ENCODE measurements at regions of chr6 and their contacts with region 1.

Region 1: GRCh38 chr6:44096612-44097011 is 30.6 kb downstream of the MRPL14 start:
- DNase-seq: peak; percentile 45 to 78 (median 68)
- ATAC-seq: peak; percentile 92
- H3K4me3 ChIP-seq: no peak overlapping the region
- H3K4me3 Mint-ChIP-seq: no peak overlapping the region
- H3K27ac ChIP-seq: no peak overlapping the region
- H3K27ac Mint-ChIP-seq: no peak overlapping the region
- H3K4me1 ChIP-seq: no peaks in the 10 kb centered on the region
- H3K4me1 Mint-ChIP-seq: peaks cover 0 to 10% (median 0%) of the 10 kb centered on the region in 7 donors
- H3K27me3 ChIP-seq: no peaks in the 10 kb centered on the region
- H3K27me3 Mint-ChIP-seq: no peaks in the 10 kb centered on the region

Region 2: GRCh38 chr6:44151348-44152108 is 54.9 kb after region 1 on chr6:
- CTCF ChIA-PET with region 1: interaction called, 25 read pairs
- POLR2A ChIA-PET with region 1: interaction called, 3 read pairs
- intact Hi-C with region 1: loop called (anchors 1 kb)
- DNase-seq: peak; percentile 63 to 88 (median 73)
- ATAC-seq: peak; percentile 94
- H3K4me3 ChIP-seq: no peak overlapping the region
- H3K4me3 Mint-ChIP-seq: peak overlapping the region in 3 of 10 donors; percentile 30 to 42 (median 34)
- H3K27ac ChIP-seq: no peak overlapping the region
- H3K27ac Mint-ChIP-seq: peak overlapping the region in 3 of 9 donors; percentile 5 to 43 (median 34)
- H3K4me1 ChIP-seq: peaks cover 3 to 8% of the 10 kb centered on the region in 2 donors
- H3K4me1 Mint-ChIP-seq: peaks cover 0 to 7% (median 4%) of the 10 kb centered on the region in 7 donors
- H3K27me3 ChIP-seq: no peaks in the 10 kb centered on the region
- H3K27me3 Mint-ChIP-seq: no peaks in the 10 kb centered on the region

Region 3: DNA sequence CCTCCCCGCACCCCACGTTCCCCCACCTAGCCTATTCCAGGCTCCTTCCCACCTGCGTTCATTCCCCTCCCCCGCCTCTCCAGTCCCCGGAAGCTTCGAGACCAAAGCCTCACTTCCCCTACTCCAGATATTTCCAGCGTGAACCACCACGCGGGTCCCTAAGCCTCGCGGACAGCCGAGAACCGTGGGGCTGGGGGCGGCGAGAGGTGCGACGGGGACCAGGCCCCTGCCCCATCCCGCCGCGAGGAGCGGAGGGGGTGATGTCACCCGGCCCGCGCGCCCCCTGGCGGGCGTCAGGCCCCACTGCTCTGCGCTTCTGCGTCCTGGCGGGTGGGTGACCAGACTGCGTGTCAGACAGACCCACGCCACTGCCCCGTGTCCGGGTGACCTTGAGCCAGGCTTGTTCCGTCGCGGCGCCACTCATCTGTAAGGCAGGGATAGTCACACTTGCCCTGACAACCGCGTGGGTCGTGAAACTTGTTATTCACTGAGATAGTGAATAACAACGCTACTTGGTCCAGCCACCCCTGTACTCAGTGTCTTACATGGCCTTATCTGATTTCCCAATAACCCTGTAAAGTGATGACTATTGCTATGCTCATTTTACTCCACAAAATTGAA is 141.3 kb after region 1 on chr6:
- CTCF ChIA-PET with region 1: interaction called, 4 read pairs
- POLR2A ChIA-PET with region 1: no interaction called
- intact Hi-C with region 1: loop called (anchors 1 kb)
- DNase-seq: peak; percentile 62 to 87 (median 80)
- ATAC-seq: peak; percentile 94
- H3K4me3 ChIP-seq: peak overlapping the region; percentile 93
- H3K4me3 Mint-ChIP-seq: peak overlapping the region; percentile 82 to 92 (median 90)
- H3K27ac ChIP-seq: peak overlapping the region; percentile 83
- H3K27ac Mint-ChIP-seq: peak overlapping the region; percentile 38 to 98 (median 89)
- H3K4me1 ChIP-seq: peaks cover 5 to 7% of the 10 kb centered on the region in 2 donors
- H3K4me1 Mint-ChIP-seq: peaks cover 0 to 28% (median 11%) of the 10 kb centered on the region in 7 donors
- H3K27me3 ChIP-seq: no peaks in the 10 kb centered on the region
- H3K27me3 Mint-ChIP-seq: no peaks in the 10 kb centered on the region

Region 4: GRCh38 chr6:44312901-44313788 is 216.5 kb after region 1 on chr6 and contains the start of gene AARS2:
- CTCF ChIA-PET with region 1: no interaction called
- POLR2A ChIA-PET with region 1: no interaction called
- intact Hi-C with region 1: no loop called
- DNase-seq: peak; percentile 79 to 95 (median 88)
- ATAC-seq: peak; percentile 99
- H3K4me3 ChIP-seq: peak within 1 kb of the TSS; percentile 91
- H3K4me3 Mint-ChIP-seq: peak within 1 kb of the TSS; percentile 94 to 100 (median 96)
- H3K27ac ChIP-seq: peak within 1 kb of the TSS; percentile 89
- H3K27ac Mint-ChIP-seq: peak within 1 kb of the TSS; percentile 88 to 98 (median 94)
- H3K4me1 ChIP-seq: peaks cover 7 to 9% of the 10 kb centered on the region in 2 donors
- H3K4me1 Mint-ChIP-seq: peaks cover 16 to 32% (median 25%) of the 10 kb centered on the region in 7 donors
- H3K27me3 ChIP-seq: no peaks in the 10 kb centered on the region
- H3K27me3 Mint-ChIP-seq: peaks cover 0 to 13% (median 3%) of the 10 kb centered on the region in 5 donors
- total RNA-seq, gene AARS2: 13.5 to 29.8 (median 20.9) TPM

Region 5: DNA sequence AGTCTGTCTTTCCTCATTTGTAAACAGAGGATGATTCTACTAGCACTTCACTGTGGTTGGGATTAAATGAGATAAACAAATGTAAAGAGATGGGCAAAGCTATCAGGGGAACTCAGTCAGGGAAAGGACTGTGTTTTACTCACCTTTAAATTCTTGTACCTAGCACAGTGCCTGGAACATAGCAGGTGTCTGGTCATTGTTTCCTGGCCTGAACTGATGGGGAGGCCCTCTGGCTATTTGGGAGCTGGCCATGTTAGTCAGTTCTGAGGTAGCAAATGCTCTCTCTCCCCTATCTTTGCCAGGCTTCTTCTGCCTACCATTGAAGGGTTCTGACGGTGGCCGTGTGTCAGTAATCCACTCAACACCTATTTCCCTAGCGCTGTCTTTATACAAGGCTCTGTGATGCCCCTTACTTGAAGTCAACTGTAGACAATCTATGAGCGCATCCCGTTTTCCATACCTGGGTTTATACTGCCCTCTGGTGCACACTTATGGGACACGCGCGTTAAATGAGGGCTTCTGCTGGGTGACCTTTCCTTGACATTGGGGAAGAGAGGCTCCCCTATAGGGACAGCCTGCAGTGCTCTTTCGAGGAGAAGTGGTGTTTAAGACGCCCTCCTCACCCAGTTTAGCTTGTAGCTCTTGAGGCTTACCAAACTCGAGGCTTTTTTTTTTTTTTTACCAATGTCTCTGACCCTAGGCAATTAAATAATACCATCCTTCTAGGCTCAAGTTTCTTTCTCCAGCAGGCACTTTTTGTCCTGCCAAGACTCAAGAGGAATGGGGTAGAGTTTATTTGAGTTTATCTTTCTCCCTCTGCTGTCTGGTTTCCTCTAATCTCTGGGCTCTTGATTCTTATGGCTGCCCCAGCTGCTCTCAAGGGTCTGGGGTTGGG is 241.9 kb after region 1 on chr6:
- CTCF ChIA-PET with region 1: interaction called, 5 read pairs
- POLR2A ChIA-PET with region 1: no interaction called
- intact Hi-C with region 1: loop called (anchors 1 to 5 kb)
- DNase-seq: peak; percentile 43 to 67 (median 62)
- ATAC-seq: peak; percentile 92
- H3K4me3 ChIP-seq: no peak overlapping the region
- H3K4me3 Mint-ChIP-seq: no peak overlapping the region
- H3K27ac ChIP-seq: no peak overlapping the region
- H3K27ac Mint-ChIP-seq: no peak overlapping the region
- H3K4me1 ChIP-seq: no peaks in the 10 kb centered on the region
- H3K4me1 Mint-ChIP-seq: peaks cover 0 to 4% (median 0%) of the 10 kb centered on the region in 7 donors
- H3K27me3 ChIP-seq: no peaks in the 10 kb centered on the region
- H3K27me3 Mint-ChIP-seq: peaks cover 18 to 33% (median 24%) of the 10 kb centered on the region in 5 donors